ENCODE measurements at regions of chr12 and their contacts with region 1.

Region 1: GRCh38 chr12:15220994-15221885 is at the start of gene RERG:
- DNase-seq: peak; percentile 88
- H3K4me3 ChIP-seq: peak within 1 kb of the TSS; percentile 45 to 58
- H3K27ac ChIP-seq: no peak within 1 kb of the TSS
- H3K4me1 ChIP-seq: peaks cover 0 to 4% of the 10 kb centered on the region in 2 experiments; a peak in 2 of 4 replicates
- H3K27me3 ChIP-seq: no peaks in the 10 kb centered on the region; the same call in 1 of the 2 replicates
- CTCF ChIP-seq: peak; percentile 90
- EP300 ChIP-seq: no peak
- RAD21 ChIP-seq: peak; percentile 86
- polyA plus RNA-seq, gene RERG: 0.49 and 0.84 TPM in 2 replicates

Region 2: GRCh38 chr12:15131431-15131830 is 89.8 kb before region 1 on chr12:
- CTCF ChIA-PET with region 1: interaction called, 14 read pairs
- POLR2A ChIA-PET with region 1: no interaction called
- DNase-seq: no peak
- H3K4me3 ChIP-seq: no peak overlapping the region
- H3K27ac ChIP-seq: no peak overlapping the region
- H3K4me1 ChIP-seq: no peaks in the 10 kb centered on the region
- H3K27me3 ChIP-seq: no peaks in the 10 kb centered on the region
- CTCF ChIP-seq: no peak
- EP300 ChIP-seq: no peak
- RAD21 ChIP-seq: no peak

Region 3: DNA sequence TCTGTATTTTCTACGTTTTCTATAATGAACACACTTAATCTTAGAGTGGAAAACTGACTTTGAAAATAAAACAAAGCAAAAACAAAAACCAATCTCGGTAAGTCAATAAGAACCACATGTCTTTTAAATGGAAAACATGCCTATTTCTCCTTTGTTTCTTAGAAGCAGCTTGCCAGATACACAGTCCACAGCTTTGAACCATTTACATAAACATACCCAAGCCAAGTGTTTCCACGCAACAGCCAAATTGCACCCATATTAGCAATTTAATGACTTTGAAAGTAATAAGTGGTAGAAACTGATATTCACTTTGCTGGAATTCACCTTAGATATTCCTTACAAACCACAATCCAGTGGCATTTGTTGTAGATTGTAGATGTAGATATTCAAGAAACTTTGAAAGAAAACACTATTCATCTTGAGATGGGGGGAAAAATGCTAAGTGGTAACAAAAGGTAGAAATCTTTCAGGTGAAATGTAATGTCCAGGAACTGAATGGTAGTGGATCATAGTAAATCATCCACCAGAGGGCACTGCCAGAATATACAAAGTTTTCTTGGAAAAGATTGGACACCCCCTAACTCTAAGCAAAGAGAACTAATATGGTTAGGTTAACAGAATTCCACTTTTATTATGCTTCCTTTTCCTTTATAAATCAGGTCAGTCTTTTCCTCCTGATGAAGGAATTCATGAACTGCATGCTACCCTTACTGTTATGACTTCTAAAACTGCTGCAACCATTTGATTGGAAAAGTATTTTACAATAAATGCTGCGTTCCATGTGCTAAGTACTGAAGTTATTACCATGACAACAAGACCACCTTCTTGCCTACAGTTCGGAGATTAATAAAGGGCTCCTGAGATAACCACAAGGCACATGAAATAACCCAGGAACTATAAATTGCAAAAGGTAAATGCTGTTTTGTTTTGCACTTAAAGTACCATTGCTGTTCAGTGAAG is 69.8 kb before region 1 on chr12:
- CTCF ChIA-PET with region 1: interaction called, 54 read pairs
- POLR2A ChIA-PET with region 1: no interaction called
- DNase-seq: peak; percentile 27
- H3K4me3 ChIP-seq: no peak overlapping the region; a peak in 1 of 4 replicates
- H3K27ac ChIP-seq: no peak overlapping the region
- H3K4me1 ChIP-seq: no peaks in the 10 kb centered on the region
- H3K27me3 ChIP-seq: peaks cover 5% of the 10 kb centered on the region
- CTCF ChIP-seq: peak; percentile 66
- EP300 ChIP-seq: no peak
- RAD21 ChIP-seq: peak; percentile 59

Region 4: GRCh38 chr12:15181017-15181683 is 40.1 kb before region 1 on chr12:
- CTCF ChIA-PET with region 1: interaction called, 29 read pairs
- POLR2A ChIA-PET with region 1: no interaction called
- DNase-seq: no peak
- H3K4me3 ChIP-seq: no peak overlapping the region
- H3K27ac ChIP-seq: no peak overlapping the region
- H3K4me1 ChIP-seq: no peaks in the 10 kb centered on the region
- H3K27me3 ChIP-seq: no peaks in the 10 kb centered on the region; the same call in 1 of the 2 replicates
- CTCF ChIP-seq: no peak
- EP300 ChIP-seq: no peak
- RAD21 ChIP-seq: no peak

Region 5: GRCh38 chr12:15208125-15208524 is 13.1 kb before region 1 on chr12:
- CTCF ChIA-PET with region 1: interaction called, 36 read pairs
- POLR2A ChIA-PET with region 1: no interaction called
- DNase-seq: no peak
- H3K4me3 ChIP-seq: no peak overlapping the region
- H3K27ac ChIP-seq: no peak overlapping the region
- H3K4me1 ChIP-seq: no peaks in the 10 kb centered on the region
- H3K27me3 ChIP-seq: no peaks in the 10 kb centered on the region
- CTCF ChIP-seq: peak; percentile 52
- EP300 ChIP-seq: no peak
- RAD21 ChIP-seq: no peak

Region 6: DNA sequence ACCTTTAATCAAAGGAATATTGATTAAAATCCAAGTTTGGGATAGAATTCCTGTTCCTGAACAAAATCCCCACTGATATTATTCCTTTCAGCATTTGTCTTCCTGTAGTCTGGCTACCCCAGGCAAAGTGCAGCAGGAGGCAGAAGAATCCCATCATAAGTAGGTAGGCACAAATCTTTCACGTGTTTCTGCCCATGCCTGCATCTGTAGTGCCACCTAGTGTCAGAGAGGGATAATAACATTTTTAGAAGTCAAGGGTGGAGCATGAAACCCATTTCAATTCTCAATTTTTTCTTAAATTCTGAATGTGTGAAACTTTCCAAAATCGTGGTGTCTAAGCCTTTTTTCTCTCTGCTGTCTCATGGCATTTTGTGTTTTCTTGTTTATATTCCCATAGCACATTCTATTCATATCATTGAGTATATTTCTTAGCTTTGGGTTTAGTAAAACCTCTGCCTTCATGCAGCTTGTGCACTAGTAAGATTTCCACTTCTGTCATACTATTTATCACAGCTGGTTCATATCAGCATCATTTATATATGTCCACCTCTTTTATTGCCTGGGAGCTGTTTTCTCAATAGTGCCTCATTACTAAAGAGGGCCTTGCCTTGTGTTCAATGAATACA is 47.8 kb after region 1 on chr12:
- CTCF ChIA-PET with region 1: interaction called, 16 read pairs
- POLR2A ChIA-PET with region 1: no interaction called
- DNase-seq: peak; percentile 67
- H3K4me3 ChIP-seq: no peak overlapping the region; a peak in 1 of 4 replicates
- H3K27ac ChIP-seq: no peak overlapping the region
- H3K4me1 ChIP-seq: no peaks in the 10 kb centered on the region; a peak in 2 of 4 replicates
- H3K27me3 ChIP-seq: no peaks in the 10 kb centered on the region
- CTCF ChIP-seq: peak; percentile 92
- EP300 ChIP-seq: no peak
- RAD21 ChIP-seq: peak; percentile 88

Region 7: GRCh38 chr12:15334225-15334624 is 113.0 kb after region 1 on chr12:
- CTCF ChIA-PET with region 1: no interaction called
- POLR2A ChIA-PET with region 1: no interaction called
- DNase-seq: no peak
- H3K4me3 ChIP-seq: no peak overlapping the region
- H3K27ac ChIP-seq: no peak overlapping the region
- H3K4me1 ChIP-seq: 0 out of 4 replicates have a peak, but pooled peaks cover 0 to 6% of the 10 kb centered on the region in 2 experiments
- H3K27me3 ChIP-seq: no peaks in the 10 kb centered on the region
- CTCF ChIP-seq: no peak
- EP300 ChIP-seq: no peak
- RAD21 ChIP-seq: no peak

Region 8: GRCh38 chr12:15404485-15404884 is 183.2 kb after region 1 on chr12:
- CTCF ChIA-PET with region 1: no interaction called
- POLR2A ChIA-PET with region 1: no interaction called
- DNase-seq: no peak
- H3K4me3 ChIP-seq: no peak overlapping the region
- H3K27ac ChIP-seq: peak overlapping the region in 1 of 2 experiments; percentile 57; a peak in 2 of 4 replicates
- H3K4me1 ChIP-seq: 0 out of 4 replicates have a peak, but pooled peaks cover 0 to 8% of the 10 kb centered on the region in 2 experiments
- H3K27me3 ChIP-seq: no peaks in the 10 kb centered on the region
- CTCF ChIP-seq: no peak
- EP300 ChIP-seq: peak in 1 of 2 experiments; percentile 62; a peak in 1 of 4 replicates
- RAD21 ChIP-seq: no peak

Region 9: GRCh38 chr12:15522565-15523187 is 301.4 kb after region 1 on chr12:
- CTCF ChIA-PET with region 1: interaction called, 13 read pairs
- POLR2A ChIA-PET with region 1: no interaction called
- DNase-seq: peak; percentile 43
- H3K4me3 ChIP-seq: no peak overlapping the region
- H3K27ac ChIP-seq: no peak overlapping the region
- H3K4me1 ChIP-seq: no peaks in the 10 kb centered on the region
- H3K27me3 ChIP-seq: no peaks in the 10 kb centered on the region
- CTCF ChIP-seq: peak; percentile 79
- EP300 ChIP-seq: no peak
- RAD21 ChIP-seq: peak; percentile 93

Region 10: DNA sequence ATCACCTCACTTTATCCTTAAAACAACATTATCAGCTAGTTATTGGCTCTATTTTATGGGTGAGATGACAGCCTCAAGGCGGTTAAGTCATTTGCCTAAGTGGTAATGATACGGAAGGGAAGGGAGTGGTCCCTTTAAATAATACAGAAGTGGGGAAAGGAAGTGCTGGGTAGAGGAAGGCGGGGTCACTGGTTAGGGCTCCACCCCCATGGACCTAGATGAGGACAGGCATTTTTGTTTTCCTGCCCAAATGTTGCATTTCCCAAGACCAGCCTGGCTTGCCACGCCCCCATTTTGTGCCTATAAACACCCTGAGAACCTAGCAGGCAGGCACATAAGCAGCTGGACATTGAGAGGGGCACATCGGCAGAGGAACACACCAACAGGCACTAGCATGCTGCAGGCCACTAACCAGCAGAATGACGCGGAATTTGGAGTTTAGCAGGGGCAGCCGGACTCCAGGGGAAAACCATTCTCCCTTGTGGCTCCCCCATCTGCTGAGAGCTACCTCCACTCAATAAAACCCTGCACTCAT is 467.0 kb after region 1 on chr12:
- CTCF ChIA-PET with region 1: no interaction called
- POLR2A ChIA-PET with region 1: no interaction called
- DNase-seq: no peak
- H3K4me3 ChIP-seq: no peak overlapping the region
- H3K27ac ChIP-seq: no peak overlapping the region; a peak in 1 of 4 replicates
- H3K4me1 ChIP-seq: peaks cover 0 to 10% of the 10 kb centered on the region in 2 experiments; a peak in 1 of 4 replicates
- H3K27me3 ChIP-seq: no peaks in the 10 kb centered on the region
- CTCF ChIP-seq: no peak
- EP300 ChIP-seq: no peak
- RAD21 ChIP-seq: no peak